Mammary epithelial cell (primary cell): ENCODE measurements at regions of chr19 and their contacts with region 1.

Region 1: DNA sequence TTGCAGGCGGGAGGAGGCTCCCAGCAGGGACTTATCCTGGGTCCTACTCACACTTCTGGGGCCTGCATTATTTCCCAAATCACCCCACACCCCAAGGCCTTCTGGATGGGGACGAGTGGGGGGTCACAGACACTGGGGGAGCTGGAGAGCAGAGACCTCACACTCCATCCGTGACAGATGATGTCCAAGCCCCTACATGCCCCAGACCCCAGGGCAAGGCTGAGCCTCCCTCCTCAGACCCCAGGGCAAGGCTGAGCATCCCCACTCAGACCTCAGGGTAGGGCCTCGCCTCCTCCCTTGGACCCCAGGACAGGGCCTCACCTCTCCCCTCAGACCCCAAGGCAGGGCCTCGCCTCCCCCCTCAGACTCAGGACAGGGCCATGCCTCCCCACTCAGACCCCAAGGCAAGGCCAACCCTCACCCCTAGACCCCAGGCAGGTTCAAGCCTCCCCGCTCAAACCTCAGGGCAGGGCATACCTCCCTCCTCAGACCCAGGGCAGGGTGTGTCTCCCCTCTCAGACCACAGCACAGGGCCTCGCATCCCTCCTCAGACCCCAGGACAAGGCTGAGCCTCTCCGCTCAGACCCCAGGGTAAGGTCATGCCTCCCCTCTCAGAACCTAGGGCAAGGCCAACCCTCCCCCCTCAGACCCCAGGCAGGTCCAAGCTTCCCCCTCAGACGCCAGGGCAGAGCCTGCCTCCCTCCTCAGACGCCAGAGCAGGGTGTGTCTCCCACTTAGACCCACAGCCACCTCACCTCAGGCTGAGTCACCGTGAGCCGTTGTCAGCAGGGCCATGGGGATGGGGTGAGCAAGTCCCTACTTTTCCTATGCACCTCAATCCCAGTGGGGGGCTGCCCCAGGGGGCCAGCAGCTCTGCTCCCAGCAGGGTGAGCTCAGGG is 1.7 kb upstream of the S1PR4 start:
- DNase-seq: peak; percentile 94
- H3K4me3 ChIP-seq: no peak overlapping the region
- H3K27ac ChIP-seq: peak overlapping the region; percentile 95
- H3K4me1 ChIP-seq: peaks cover 36% of the 10 kb centered on the region
- H3K27me3 ChIP-seq: no peaks in the 10 kb centered on the region
- CTCF ChIP-seq: no peak

Region 2: DNA sequence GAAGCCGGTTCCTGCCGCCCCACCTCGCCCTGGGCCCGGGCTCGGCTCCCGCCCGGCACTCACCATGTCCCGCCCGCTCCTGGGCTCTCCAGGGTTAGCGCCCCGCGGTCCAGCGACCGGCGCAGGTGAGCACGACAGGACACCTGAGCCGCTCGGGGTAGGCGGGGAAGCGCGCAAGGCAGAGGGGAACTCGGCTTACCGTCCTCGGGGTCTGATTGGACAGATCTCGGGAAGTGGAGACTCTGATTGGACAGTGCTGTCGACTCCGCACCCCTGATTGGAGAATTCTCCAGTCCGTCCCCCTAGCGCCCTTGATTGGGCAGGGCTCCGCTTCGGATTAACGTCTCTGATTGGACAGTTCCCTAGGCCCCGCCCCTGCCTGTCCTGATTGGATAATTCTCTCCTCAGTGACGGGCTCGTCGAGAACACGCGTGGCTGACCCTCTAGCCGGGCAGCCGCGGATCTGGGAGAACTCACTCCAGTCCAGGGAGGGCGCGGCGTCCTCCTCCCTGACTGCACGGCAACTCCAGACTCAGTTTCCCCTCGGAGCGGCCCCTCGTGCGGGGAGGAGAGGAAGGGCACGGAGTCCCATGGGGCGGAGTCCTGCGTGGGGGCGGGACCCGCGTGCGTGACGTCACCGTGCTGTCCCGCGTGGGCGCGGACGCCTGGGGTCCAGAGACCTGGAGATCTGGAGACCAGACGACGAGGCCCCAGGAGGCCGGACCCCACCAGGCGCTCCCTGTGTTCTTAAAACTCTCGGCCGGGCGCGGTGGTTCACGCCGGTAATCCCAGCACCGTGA is 231.9 kb before region 1 on chr19 and contains the start of gene ZNF77:
- CTCF ChIA-PET with region 1: no interaction called
- dilution Hi-C with region 1: loop called (anchors 10 kb)
- in situ Hi-C with region 1: no loop called
- intact Hi-C with region 1: no loop called
- DNase-seq: peak; percentile 99
- H3K4me3 ChIP-seq: peak within 1 kb of the TSS; percentile 80 to 85 (median 84)
- H3K27ac ChIP-seq: peak within 1 kb of the TSS; percentile 71
- H3K4me1 ChIP-seq: peaks cover 6% of the 10 kb centered on the region
- H3K27me3 ChIP-seq: no peaks in the 10 kb centered on the region
- CTCF ChIP-seq: no peak
- total RNA-seq, gene ZNF77: 5.5 to 5.7 TPM

Region 3: DNA sequence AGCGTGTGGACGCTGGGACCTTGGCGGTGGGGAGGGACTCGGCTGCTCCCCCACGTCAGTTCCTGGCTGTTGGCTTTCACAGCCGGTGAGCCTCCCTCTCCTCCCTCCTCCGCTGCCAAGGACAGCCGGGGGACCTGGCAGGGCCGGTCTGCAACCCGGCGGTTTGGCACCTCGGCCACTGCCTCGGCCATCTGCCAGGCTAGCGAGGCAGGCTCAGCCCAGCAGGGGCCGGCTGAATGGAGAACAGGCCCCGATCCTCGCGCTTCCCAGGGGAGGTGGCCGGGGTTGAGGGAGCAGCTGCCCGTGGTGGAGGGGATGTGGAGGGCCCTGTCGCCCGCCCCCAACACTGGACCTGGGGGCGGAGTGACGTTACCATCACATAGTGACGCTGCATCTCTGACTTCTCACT is 119.5 kb before region 1 on chr19:
- CTCF ChIA-PET with region 1: no interaction called
- dilution Hi-C with region 1: loop called (anchors 5 kb)
- in situ Hi-C with region 1: no loop called
- intact Hi-C with region 1: no loop called
- DNase-seq: peak; percentile 62
- H3K4me3 ChIP-seq: no peak overlapping the region
- H3K27ac ChIP-seq: no peak overlapping the region
- H3K4me1 ChIP-seq: peaks cover 51% of the 10 kb centered on the region
- H3K27me3 ChIP-seq: no peaks in the 10 kb centered on the region
- CTCF ChIP-seq: no peak

Region 4: DNA sequence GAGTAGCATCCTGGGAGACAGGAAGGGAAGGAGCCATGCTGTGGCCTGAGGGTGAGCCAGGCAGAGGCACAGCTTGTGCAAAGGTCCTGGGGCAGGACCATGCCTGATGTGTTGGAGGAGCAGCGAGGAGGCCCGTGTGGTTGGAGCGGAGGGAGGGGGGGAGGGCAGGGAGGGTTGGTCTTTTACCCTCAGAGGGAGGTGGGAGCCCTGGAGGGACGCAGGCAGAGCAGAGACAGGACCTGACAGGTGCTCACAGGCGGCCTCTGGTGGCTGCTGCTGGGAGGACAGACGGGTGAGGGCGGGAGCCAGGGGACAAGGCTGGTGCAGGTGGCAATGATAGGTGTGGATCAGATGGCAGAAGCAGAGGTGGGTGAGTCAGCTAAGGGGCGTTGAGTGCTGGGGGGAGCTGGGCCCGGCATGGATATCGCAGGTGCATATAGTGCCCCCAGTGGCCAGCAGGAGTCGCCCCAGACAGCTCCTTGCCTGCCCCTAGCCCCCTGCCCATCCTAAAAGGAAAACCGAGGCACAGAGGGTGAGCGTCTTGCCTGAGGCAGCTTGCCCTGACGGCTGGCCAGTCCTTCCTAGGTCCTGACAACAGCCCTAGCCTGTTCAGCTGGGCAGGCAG is 50.8 kb before region 1 on chr19:
- CTCF ChIA-PET with region 1: interaction called, 3 read pairs
- dilution Hi-C with region 1: loop called (anchors 10 kb)
- in situ Hi-C with region 1: no loop called
- intact Hi-C with region 1: no loop called
- DNase-seq: peak; percentile 61
- H3K4me3 ChIP-seq: no peak overlapping the region
- H3K27ac ChIP-seq: no peak overlapping the region
- H3K4me1 ChIP-seq: peaks cover 6% of the 10 kb centered on the region
- H3K27me3 ChIP-seq: no peaks in the 10 kb centered on the region
- CTCF ChIP-seq: peak; percentile 71 to 73

Region 5: DNA sequence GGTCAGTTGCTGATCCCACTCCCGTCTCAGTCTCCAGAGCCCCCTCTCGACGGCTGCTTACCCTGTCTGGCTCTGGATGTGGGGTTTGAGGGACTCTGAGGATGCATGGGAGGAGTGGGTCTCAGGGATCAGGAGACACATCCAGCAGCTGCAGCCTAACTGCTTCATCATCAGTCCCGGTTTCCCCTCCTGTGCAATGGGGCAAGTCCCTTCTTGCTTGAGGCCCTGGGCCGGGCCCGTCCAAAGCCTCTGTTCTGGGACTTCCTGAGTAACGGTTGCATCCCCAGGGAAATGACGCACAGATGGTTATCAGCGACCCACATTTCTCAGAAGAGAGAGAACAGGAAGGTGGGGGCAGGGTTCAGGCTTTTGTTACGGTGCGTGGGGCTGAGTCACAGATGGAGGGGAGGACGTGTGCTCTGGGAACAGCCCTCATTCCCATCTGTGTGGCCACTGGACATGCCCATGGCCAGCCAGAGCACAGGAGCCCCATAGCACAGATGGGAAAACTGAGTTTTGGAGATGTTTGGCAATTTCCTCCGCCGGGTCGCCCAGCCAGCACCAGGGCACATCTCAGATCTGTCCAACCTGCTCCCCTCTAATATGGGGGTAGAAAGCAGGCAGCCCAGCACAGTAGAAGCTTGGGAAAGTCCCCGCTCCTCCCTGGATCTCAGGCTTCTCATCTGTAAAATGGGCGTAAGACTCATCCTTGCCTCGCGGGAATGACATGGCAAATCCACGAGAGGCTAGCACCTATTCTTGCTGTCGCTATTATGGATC is 21.7 kb before region 1 on chr19:
- CTCF ChIA-PET with region 1: no interaction called
- dilution Hi-C with region 1: no loop called
- in situ Hi-C with region 1: no loop called
- intact Hi-C with region 1: loop called (anchors 2 kb)
- DNase-seq: peak; percentile 100
- H3K4me3 ChIP-seq: peak overlapping the region in 1 of 3 experiments; percentile 22
- H3K27ac ChIP-seq: peak overlapping the region; percentile 96
- H3K4me1 ChIP-seq: peaks cover 31% of the 10 kb centered on the region
- H3K27me3 ChIP-seq: no peaks in the 10 kb centered on the region
- CTCF ChIP-seq: no peak